PC-9 (cell line): ENCODE measurements at regions of chr1 and their contacts with region 1.

Region 1: GRCh38 chr1:211514030-211514754 is 22.2 kb upstream of the RD3 start:
- DNase-seq: peak; percentile 78 to 90
- H3K4me3 ChIP-seq: no peak overlapping the region
- H3K27ac ChIP-seq: peak overlapping the region; percentile 63
- H3K4me1 ChIP-seq: peaks cover 41% of the 10 kb centered on the region
- H3K27me3 ChIP-seq: no peaks in the 10 kb centered on the region
- CTCF ChIP-seq: peak; percentile 84

Region 2: DNA sequence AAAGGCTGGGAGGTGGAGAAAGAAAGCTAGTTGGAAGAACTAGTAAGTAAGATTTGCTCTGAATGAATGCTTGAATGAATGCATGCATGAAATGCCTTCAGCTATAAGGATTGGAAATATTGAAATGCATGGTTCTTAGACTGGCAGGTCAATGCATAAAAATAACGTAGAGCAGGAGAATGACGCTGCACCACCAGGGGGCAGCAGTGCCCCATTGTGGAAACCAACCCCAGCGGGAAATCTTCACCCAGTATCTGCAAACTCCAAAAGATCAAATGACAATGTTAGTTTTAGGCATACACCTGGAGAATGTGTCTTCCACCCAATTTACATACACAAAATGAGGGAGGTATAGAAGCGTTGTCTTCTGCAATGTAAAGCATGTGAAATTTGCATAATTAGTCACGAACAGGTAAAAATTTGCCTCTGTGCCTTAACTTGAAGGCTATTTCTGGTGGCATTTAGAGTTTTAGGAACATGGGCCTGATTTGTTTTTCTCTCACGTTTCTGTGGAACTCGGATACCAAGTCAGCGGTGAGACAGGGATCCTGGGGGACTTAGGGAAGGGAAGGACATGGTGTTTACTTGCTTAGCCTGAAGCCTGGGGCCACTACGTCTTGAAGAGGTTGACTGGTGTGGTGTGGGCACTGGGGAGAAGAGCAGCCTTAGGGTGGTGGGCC is 1106.8 kb before region 1 on chr1:
- CTCF ChIA-PET with region 1: no interaction called
- POLR2A ChIA-PET with region 1: no interaction called
- intact Hi-C with region 1: loop called (anchors 1 kb)
- DNase-seq: peak; percentile 48 to 78
- H3K4me3 ChIP-seq: no peak overlapping the region
- H3K27ac ChIP-seq: no peak overlapping the region
- H3K4me1 ChIP-seq: no peaks in the 10 kb centered on the region
- H3K27me3 ChIP-seq: no peaks in the 10 kb centered on the region
- CTCF ChIP-seq: peak; percentile 95

Region 3: GRCh38 chr1:210883821-210884220 is 630.4 kb before region 1 on chr1:
- CTCF ChIA-PET with region 1: no interaction called
- POLR2A ChIA-PET with region 1: no interaction called
- intact Hi-C with region 1: no loop called
- DNase-seq: no peak
- H3K4me3 ChIP-seq: no peak overlapping the region
- H3K27ac ChIP-seq: no peak overlapping the region
- H3K4me1 ChIP-seq: 0 out of 2 replicates have a peak, but pooled peaks cover 9% of the 10 kb centered on the region
- H3K27me3 ChIP-seq: peaks cover 26% of the 10 kb centered on the region
- CTCF ChIP-seq: no peak

Region 4: DNA sequence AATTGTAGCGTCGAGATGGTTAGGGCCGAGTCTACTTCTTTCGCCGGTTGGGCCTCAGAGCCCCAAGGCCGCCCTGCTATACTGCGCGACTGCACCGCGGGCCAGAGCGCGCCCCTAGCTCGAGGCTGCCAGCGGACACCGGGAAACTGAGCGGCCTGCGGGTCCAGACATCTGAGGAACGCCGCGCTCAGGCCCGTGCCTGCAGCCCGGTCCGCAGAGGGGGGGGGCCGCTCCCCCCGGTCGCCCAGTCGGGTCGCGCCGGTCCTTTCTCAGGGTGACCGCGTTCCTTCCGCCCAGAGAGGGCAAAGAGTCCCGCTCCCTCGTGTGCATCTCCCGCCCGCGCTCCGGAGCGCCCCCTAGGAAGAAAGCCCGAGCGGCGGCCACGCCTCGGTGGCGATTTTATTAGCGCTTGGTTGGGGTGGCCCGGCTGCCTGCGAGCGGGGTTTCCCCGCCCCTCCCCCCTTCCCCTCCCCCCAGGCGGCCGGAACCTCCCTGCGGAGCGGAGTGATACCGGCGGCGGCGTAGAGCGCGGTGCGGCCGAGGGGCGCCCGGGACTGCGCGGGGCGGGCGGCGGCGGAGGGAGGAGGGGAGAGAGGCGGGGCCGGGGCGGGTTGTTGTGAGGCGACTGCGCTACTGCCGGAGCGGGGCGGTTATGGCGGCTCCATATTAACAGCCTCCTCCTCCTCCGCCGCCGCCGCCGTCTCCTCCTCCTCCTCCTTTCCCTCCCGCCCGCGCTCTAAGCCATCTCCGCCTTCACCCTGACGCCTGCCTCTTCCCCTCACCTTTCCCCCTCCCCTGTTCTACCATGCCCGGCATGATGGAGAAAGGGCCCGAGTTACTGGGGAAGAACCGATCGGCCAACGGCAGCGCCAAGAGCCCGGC is 255.2 kb before region 1 on chr1 and contains the start of gene RCOR3:
- CTCF ChIA-PET with region 1: no interaction called
- POLR2A ChIA-PET with region 1: no interaction called
- intact Hi-C with region 1: loop called (anchors 1 kb)
- DNase-seq: peak; percentile 61 to 93
- H3K4me3 ChIP-seq: peak within 1 kb of the TSS; percentile 98
- H3K27ac ChIP-seq: peak within 1 kb of the TSS; percentile 79
- H3K4me1 ChIP-seq: peaks cover 20% of the 10 kb centered on the region
- H3K27me3 ChIP-seq: no peaks in the 10 kb centered on the region
- CTCF ChIP-seq: peak; percentile 63
- total RNA-seq, gene RCOR3: 42.1 and 48.7 TPM in 2 replicates

Region 5: GRCh38 chr1:211393203-211393602 is 121.0 kb before region 1 on chr1:
- CTCF ChIA-PET with region 1: no interaction called
- POLR2A ChIA-PET with region 1: no interaction called
- intact Hi-C with region 1: no loop called
- DNase-seq: no peak
- H3K4me3 ChIP-seq: no peak overlapping the region
- H3K27ac ChIP-seq: no peak overlapping the region
- H3K4me1 ChIP-seq: no peaks in the 10 kb centered on the region
- H3K27me3 ChIP-seq: no peaks in the 10 kb centered on the region
- CTCF ChIP-seq: no peak

Region 6: GRCh38 chr1:211476200-211476849 is 37.9 kb before region 1 on chr1:
- CTCF ChIA-PET with region 1: interaction called, 6 read pairs
- POLR2A ChIA-PET with region 1: no interaction called
- intact Hi-C with region 1: loop called (anchors 1 kb)
- DNase-seq: peak in 1 of 2 experiments; percentile 66
- H3K4me3 ChIP-seq: no peak overlapping the region
- H3K27ac ChIP-seq: no peak overlapping the region
- H3K4me1 ChIP-seq: no peaks in the 10 kb centered on the region
- H3K27me3 ChIP-seq: no peaks in the 10 kb centered on the region
- CTCF ChIP-seq: peak; percentile 88

Region 7: DNA sequence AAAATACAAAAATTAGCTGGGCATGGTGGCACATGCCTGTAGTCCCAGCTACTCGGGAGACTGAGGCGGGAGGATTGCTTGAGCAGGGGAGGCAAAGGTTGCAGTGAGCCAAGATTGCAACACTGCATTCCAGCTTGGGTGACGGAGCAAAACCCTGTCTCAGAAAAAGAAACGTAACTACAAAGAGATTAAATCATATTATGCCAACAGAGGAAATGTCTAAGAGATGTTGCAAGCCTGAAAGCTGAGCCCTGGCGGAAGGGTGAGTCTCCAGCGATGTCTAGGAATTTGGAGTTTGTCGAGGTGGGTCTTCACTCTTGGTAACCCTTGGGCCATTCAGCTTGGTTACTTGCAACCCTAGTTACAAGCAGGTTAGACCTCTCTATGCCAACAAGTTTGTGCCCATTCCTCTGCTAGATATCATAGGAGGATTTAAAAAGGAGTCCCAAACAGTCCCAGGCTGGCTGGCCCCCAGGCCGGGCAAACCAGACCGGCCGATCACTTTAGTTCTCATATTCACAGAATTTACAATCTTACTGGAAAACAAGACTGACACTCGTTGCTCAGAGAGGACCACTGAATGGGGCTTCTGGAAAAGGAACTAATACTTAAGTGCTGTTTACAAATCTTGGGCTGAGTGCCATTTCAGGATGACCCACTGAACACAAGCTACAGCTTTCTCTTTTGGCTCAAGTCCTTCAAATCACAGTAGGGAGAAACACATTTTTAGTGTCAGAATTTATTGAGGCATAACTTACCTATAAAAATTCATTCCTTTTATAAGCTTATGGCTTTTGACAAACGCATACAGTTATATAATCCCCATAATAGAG is 37.7 kb after region 1 on chr1:
- CTCF ChIA-PET with region 1: interaction called, 4 read pairs
- POLR2A ChIA-PET with region 1: interaction called, 7 read pairs
- intact Hi-C with region 1: loop called (anchors 1 kb)
- DNase-seq: peak; percentile 86 to 97
- H3K4me3 ChIP-seq: peak overlapping the region; percentile 35; the same call in 1 of the 2 replicates
- H3K27ac ChIP-seq: peak overlapping the region; percentile 84
- H3K4me1 ChIP-seq: peaks cover 75% of the 10 kb centered on the region
- H3K27me3 ChIP-seq: no peaks in the 10 kb centered on the region
- CTCF ChIP-seq: no peak

Region 8: DNA sequence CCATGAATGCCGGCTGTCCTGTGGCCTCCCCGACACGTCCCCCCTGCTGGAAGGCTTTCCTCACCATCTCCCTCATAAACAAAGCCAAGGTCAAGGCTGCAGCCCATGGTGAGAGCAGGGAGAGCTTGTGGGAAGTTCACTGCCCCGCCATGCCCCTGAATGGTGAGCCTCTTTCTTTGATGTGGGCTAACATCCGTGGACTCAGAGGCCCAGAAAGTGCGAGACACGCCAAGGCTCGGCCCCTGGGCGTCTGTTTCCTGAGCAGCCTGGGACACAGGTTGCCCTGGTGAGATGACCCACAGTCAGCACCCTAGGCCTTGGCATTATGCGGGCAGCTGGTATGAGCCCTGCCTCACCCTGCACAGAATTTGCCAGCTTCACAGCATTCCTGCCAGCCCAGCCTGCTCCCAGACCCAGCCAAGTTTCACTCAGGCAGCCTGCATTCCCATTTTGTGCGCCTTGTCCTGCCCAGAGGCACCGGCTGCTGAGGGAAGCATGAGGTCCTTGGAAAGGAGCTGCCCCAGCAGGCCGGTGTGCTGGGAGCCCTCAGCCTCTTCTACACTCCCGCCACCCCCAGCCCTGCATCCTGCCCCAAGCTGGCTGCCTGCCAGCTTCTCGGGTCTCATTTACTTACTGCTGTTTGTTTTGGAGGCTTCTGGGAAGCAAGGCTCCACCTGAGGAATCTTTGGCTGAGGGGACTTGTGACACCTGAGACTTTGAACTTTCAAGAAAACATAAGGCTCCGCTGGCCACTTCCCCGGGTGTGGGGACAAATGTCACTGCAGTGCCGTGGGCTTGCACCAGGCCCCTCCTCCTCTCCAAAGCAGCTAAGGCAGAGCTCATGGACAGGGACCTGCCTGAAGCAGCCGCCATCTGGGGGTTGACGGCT is 129.4 kb after region 1 on chr1:
- CTCF ChIA-PET with region 1: interaction called, 4 read pairs
- POLR2A ChIA-PET with region 1: interaction called, 3 read pairs
- intact Hi-C with region 1: loop called (anchors 1 kb)
- DNase-seq: peak; percentile 90 to 91
- H3K4me3 ChIP-seq: peak overlapping the region; percentile 17; the same call in 1 of the 2 replicates
- H3K27ac ChIP-seq: peak overlapping the region; percentile 92
- H3K4me1 ChIP-seq: peaks cover 97% of the 10 kb centered on the region
- H3K27me3 ChIP-seq: no peaks in the 10 kb centered on the region
- CTCF ChIP-seq: no peak